ENCODE measurements at regions of chr3 and their contacts with region 1.

Region 1: DNA sequence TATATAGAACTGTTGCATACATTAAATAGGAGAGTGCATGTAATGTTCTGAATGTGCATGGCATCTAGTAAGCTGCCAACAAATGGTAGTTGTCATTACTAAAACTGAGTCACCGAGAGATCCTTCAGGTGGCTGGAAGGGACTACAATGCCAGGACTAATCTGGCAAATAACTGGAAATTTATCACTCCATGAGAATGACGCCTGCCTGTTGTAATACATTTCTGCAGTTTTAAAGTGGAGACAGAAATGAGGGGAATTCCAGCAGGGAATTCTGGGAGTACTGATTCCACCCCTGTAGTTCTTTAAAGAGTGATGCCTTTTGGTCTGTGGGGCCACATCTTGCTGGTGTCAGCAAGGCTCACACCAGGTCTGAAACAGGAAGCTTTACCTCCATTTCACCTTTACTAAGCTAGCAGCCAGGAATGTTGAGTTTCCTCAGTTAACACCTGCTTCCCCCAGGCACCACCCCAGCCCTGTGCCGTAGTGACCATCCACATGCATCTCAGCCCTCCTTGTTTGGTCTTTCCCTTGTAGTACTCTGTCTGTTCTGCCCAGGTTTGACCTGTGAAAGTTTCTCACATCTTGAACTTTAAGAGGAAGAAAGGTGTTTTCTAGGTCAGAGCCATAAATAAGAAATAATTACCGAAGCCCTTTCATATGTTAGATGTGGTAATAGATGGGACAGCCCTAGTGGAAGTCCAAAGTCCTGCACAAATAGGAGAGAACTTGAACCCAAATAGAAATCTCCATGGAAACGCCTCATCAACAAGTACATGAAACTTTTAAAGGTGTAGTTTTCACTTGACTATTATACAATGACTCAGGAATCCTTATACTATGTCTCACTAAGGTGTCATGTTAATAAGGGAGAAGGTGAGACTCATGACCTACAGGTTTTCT is 56.7 kb upstream of the LMOD3 start:
- H3K4me3 Mint-ChIP-seq: no peak overlapping the region
- H3K27ac Mint-ChIP-seq: no peak overlapping the region
- H3K4me1 Mint-ChIP-seq: no peaks in the 10 kb centered on the region
- H3K27me3 Mint-ChIP-seq: no peaks in the 10 kb centered on the region

Region 2: GRCh38 chr3:69033470-69033869 is 145.6 kb before region 1 on chr3:
- intact Hi-C with region 1: loop called (anchors 10 kb)
- H3K4me3 Mint-ChIP-seq: no peak overlapping the region
- H3K27ac Mint-ChIP-seq: peak overlapping the region; percentile 62
- H3K4me1 Mint-ChIP-seq: peaks cover 6% of the 10 kb centered on the region
- H3K27me3 Mint-ChIP-seq: no peaks in the 10 kb centered on the region

Region 3: GRCh38 chr3:69300296-69300695 is 121.2 kb after region 1 on chr3:
- intact Hi-C with region 1: loop called (anchors 5 kb)
- H3K4me3 Mint-ChIP-seq: no peak overlapping the region
- H3K27ac Mint-ChIP-seq: no peak overlapping the region
- H3K4me1 Mint-ChIP-seq: peaks cover 6% of the 10 kb centered on the region
- H3K27me3 Mint-ChIP-seq: no peaks in the 10 kb centered on the region